Colonic mucosa (tissue), 4 donors: ENCODE measurements at regions of chr5 and their contacts with region 1.

Region 1: GRCh38 chr5:52799983-52800393 is 12.3 kb downstream of the ITGA1 start:
- DNase-seq: peak; percentile 98
- H3K4me3 ChIP-seq: peak overlapping the region; percentile 71
- H3K27ac ChIP-seq: peak overlapping the region; percentile 95
- H3K4me1 ChIP-seq: peaks cover 6% of the 10 kb centered on the region
- H3K27me3 ChIP-seq: no peaks in the 10 kb centered on the region
- CTCF ChIP-seq: no peak

Region 2: GRCh38 chr5:52895572-52896413 is 95.8 kb after region 1 on chr5:
- intact Hi-C with region 1: loop called (anchors 5 kb)
- DNase-seq: no peak
- H3K4me3 ChIP-seq: no peak overlapping the region
- H3K27ac ChIP-seq: no peak overlapping the region
- H3K4me1 ChIP-seq: no peaks in the 10 kb centered on the region
- H3K27me3 ChIP-seq: no peaks in the 10 kb centered on the region
- CTCF ChIP-seq: no peak

Region 3: DNA sequence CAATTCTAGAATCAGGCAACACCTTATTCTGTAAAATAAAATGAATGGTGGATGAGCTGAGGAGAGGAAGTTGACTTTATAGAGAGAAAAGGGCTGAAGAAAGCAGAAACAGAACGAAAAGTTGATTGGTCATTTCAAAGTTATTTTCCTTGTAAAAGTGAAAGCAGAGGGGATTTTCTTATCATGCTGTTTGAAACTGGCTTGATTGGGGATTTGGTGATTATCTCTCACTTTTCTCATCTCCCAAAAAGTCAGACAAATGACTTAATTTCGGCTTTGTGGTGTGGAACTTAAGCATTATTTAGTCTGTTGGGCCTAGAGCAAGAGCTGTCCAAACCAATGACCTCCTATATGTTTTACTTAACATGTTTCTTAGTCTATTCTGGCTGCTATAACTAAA is 128.7 kb after region 1 on chr5:
- intact Hi-C with region 1: no loop called
- DNase-seq: no peak
- H3K4me3 ChIP-seq: no peak overlapping the region
- H3K27ac ChIP-seq: no peak overlapping the region
- H3K4me1 ChIP-seq: no peaks in the 10 kb centered on the region
- H3K27me3 ChIP-seq: no peaks in the 10 kb centered on the region
- CTCF ChIP-seq: no peak

Region 4: GRCh38 chr5:53008751-53009150 is 208.8 kb after region 1 on chr5:
- intact Hi-C with region 1: no loop called
- DNase-seq: no peak
- H3K4me3 ChIP-seq: no peak overlapping the region
- H3K27ac ChIP-seq: no peak overlapping the region
- H3K4me1 ChIP-seq: peaks cover 3% of the 10 kb centered on the region
- H3K27me3 ChIP-seq: no peaks in the 10 kb centered on the region
- CTCF ChIP-seq: no peak

Region 5: DNA sequence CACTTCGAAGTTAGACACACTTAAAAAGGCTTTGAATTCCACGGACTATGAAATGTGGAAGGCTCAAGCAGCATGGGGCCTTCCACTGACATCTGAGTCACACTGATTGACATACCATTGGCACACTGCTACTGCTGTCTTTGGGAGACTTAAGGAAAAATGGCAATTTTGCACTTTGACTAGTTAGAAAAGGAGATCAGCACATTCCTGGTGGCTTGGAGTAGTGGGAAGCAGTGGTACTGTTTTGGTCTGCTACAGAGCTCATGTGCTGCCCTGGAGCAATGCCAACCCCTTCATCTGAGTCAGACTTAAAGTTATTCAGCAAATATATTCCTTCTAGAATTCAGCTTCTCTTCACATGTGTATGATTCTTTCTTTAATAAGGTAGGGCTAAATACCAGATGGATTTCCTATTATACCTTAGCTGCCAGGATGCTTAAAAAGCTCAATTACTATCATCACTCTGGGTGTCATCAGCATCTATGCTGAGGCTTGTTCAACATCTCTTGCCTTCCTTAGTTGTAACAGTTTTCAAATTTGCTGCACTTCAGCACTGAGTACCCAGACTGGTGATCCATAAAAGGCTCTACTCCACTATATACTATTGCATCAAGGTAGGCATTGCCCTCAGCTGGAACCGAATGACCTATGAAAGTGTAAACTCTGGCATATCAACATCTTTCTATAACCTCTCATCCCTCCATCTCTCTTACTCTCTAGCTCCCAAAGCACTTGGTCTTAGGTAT is 351.9 kb after region 1 on chr5:
- intact Hi-C with region 1: no loop called
- DNase-seq: no peak
- H3K4me3 ChIP-seq: no peak overlapping the region
- H3K27ac ChIP-seq: no peak overlapping the region
- H3K4me1 ChIP-seq: no peaks in the 10 kb centered on the region
- H3K27me3 ChIP-seq: no peaks in the 10 kb centered on the region
- CTCF ChIP-seq: no peak